Naive thymus-derived CD4-positive, alpha-beta T cell (primary cell): ENCODE measurements at regions of chr4 and their contacts with region 1.

Region 1: GRCh38 chr4:142372530-142373260 is 473.4 kb downstream of the INPP4B start:
- DNase-seq: no peak
- ATAC-seq: peak; percentile 22
- H3K4me3 ChIP-seq: no peak overlapping the region
- H3K4me3 Mint-ChIP-seq: peak overlapping the region in 7 of 10 donors; percentile 14 to 48 (median 34)
- H3K27ac ChIP-seq: no peak overlapping the region
- H3K27ac Mint-ChIP-seq: peak overlapping the region; percentile 5 to 87 (median 38)
- H3K4me1 ChIP-seq: peaks cover 53 to 64% of the 10 kb centered on the region in 2 donors
- H3K4me1 Mint-ChIP-seq: peaks cover 46 to 96% (median 91%) of the 10 kb centered on the region in 7 donors
- H3K27me3 ChIP-seq: no peaks in the 10 kb centered on the region
- H3K27me3 Mint-ChIP-seq: no peaks in the 10 kb centered on the region

Region 2: GRCh38 chr4:142396279-142396678 is 23.6 kb after region 1 on chr4:
- CTCF ChIA-PET with region 1: interaction called, 3 read pairs
- POLR2A ChIA-PET with region 1: interaction called, 4 read pairs
- intact Hi-C with region 1: loop called in 1 of 2 experiments (anchors 2 kb)
- DNase-seq: no peak
- ATAC-seq: no peak
- H3K4me3 ChIP-seq: no peak overlapping the region
- H3K4me3 Mint-ChIP-seq: peak overlapping the region in 9 of 10 donors; percentile 47 to 77 (median 66)
- H3K27ac ChIP-seq: peak overlapping the region; percentile 57
- H3K27ac Mint-ChIP-seq: peak overlapping the region in 8 of 9 donors; percentile 37 to 100 (median 63)
- H3K4me1 ChIP-seq: peaks cover 50 to 56% of the 10 kb centered on the region in 2 donors
- H3K4me1 Mint-ChIP-seq: peaks cover 35 to 94% (median 81%) of the 10 kb centered on the region in 7 donors
- H3K27me3 ChIP-seq: no peaks in the 10 kb centered on the region
- H3K27me3 Mint-ChIP-seq: no peaks in the 10 kb centered on the region